Naive thymus-derived CD4-positive, alpha-beta T cell (primary cell): ENCODE measurements at regions of chr2 and their contacts with region 1.

Region 1: GRCh38 chr2:95165129-95166064 is at the start of gene ZNF2:
- DNase-seq: peak; percentile 92 to 98 (median 96)
- ATAC-seq: peak; percentile 97
- H3K4me3 ChIP-seq: peak within 1 kb of the TSS; percentile 91
- H3K4me3 Mint-ChIP-seq: peak within 1 kb of the TSS; percentile 97 to 100 (median 99)
- H3K27ac ChIP-seq: peak within 1 kb of the TSS; percentile 82
- H3K27ac Mint-ChIP-seq: peak within 1 kb of the TSS; percentile 91 to 99 (median 96)
- H3K4me1 ChIP-seq: peaks cover 4 to 13% of the 10 kb centered on the region in 2 donors
- H3K4me1 Mint-ChIP-seq: peaks cover 23 to 54% (median 42%) of the 10 kb centered on the region in 7 donors
- H3K27me3 ChIP-seq: no peaks in the 10 kb centered on the region
- H3K27me3 Mint-ChIP-seq: no peaks in the 10 kb centered on the region
- total RNA-seq, gene ZNF2: 1.5 to 10.2 (median 3.4) TPM

Region 2: DNA sequence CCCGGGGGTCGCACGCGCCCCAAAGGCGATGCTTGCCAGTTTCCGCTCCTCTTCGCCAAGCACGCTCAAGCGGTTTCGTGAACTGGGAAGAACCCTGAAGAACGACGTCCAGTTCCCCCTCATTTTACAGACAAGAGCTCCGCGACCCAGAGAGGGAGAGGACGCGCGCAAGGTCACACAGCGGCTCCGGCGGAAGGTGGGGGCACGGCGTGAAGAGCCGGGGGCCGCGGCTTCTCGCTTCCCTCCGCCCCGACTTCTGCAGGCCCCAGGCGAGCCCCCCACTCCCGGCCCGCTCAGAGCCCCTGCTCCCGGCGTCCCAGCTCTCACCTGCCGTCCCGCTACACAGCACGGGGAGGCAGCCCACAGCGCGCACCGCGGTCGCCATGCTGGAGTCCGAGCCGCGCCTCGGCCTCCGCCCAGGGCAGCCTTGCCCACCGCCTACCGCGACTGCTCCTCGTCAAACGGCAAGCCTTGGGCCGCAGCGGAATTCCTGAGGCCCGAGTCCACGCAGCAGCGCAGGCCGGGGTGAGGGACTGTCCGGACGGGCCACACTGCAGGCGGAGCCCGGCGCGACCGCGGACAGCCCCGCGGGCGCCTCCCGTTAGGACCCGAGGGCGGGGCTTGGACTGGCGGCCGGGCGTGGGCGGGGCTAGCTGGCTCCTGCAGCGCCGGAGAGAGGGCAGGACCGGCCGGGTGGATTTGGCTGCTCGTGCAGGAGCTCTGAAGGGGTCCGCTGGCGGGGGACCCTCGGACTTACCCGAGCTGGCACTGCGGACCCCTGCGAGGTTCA is 43.8 kb before region 1 on chr2 and contains the start of gene MRPS5:
- CTCF ChIA-PET with region 1: interaction called, 3 read pairs
- POLR2A ChIA-PET with region 1: interaction called, 29 read pairs
- intact Hi-C with region 1: loop called (anchors 1 kb)
- DNase-seq: peak; percentile 63 to 95 (median 72)
- ATAC-seq: peak; percentile 98
- H3K4me3 ChIP-seq: peak within 1 kb of the TSS; percentile 74
- H3K4me3 Mint-ChIP-seq: peak within 1 kb of the TSS; percentile 91 to 99 (median 96)
- H3K27ac ChIP-seq: peak within 1 kb of the TSS; percentile 91
- H3K27ac Mint-ChIP-seq: peak within 1 kb of the TSS; percentile 92 to 97 (median 94)
- H3K4me1 ChIP-seq: peaks cover 19 to 27% of the 10 kb centered on the region in 2 donors
- H3K4me1 Mint-ChIP-seq: peaks cover 38 to 58% (median 52%) of the 10 kb centered on the region in 7 donors
- H3K27me3 ChIP-seq: no peaks in the 10 kb centered on the region
- H3K27me3 Mint-ChIP-seq: no peaks in the 10 kb centered on the region
- total RNA-seq, gene MRPS5: 26.3 to 72.9 (median 60.5) TPM